ENCODE measurements at regions of chr6 and their contacts with region 1.

Region 1: DNA sequence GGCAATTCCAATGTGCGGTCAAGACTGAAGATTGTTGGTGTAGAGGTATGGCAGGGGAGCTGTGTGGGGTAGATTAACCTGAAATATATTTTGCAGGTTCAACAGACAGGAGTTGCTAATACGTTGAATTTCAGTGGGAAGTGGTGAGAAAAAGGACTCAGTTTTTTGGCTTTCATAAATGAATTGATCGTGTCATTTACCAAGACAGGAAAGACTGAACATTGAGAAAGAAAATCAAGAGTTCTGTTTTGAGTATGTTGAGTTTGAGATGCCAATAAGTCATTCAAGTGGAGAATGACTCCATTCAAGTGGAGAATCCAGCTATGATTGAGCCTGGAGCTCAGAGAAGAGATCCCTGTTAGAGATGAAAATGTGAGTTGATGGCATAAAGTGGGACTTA is 31.1 kb downstream of the NFYA start:
- DNase-seq: no peak
- H3K4me3 ChIP-seq: no peak overlapping the region
- CTCF ChIP-seq: no peak
- POLR2A ChIP-seq: no peak

Region 2: GRCh38 chr6:41122373-41122772 is 18.5 kb after region 1 on chr6:
- intact Hi-C with region 1: loop called (anchors 2 kb)
- DNase-seq: no peak
- H3K4me3 ChIP-seq: no peak overlapping the region
- CTCF ChIP-seq: no peak
- POLR2A ChIP-seq: no peak

Region 3: GRCh38 chr6:41150669-41151068 is 46.8 kb after region 1 on chr6:
- intact Hi-C with region 1: no loop called
- DNase-seq: no peak
- H3K4me3 ChIP-seq: no peak overlapping the region
- CTCF ChIP-seq: no peak
- POLR2A ChIP-seq: no peak

Region 4: GRCh38 chr6:41344876-41345275 is 241.0 kb after region 1 on chr6:
- intact Hi-C with region 1: no loop called
- DNase-seq: no peak
- H3K4me3 ChIP-seq: no peak overlapping the region
- CTCF ChIP-seq: no peak
- POLR2A ChIP-seq: no peak

Measured in lower leg skin (tissue), 4 donors.